Endothelial cell of umbilical vein (primary cell): ENCODE measurements at regions of chr15 and their contacts with region 1.

Region 1: GRCh38 chr15:78000091-78000926 is 77.2 kb downstream of the TBC1D2B start:
- DNase-seq: peak; percentile 79
- H3K4me3 ChIP-seq: no peak overlapping the region
- H3K27ac ChIP-seq: no peak overlapping the region
- H3K4me1 ChIP-seq: no peaks in the 10 kb centered on the region
- H3K27me3 ChIP-seq: no peaks in the 10 kb centered on the region
- CTCF ChIP-seq: peak; percentile 83 to 88
- POLR2A ChIP-seq: no peak

Region 2: GRCh38 chr15:77461486-77461885 is 538.8 kb before region 1 on chr15:
- CTCF ChIA-PET with region 1: no interaction called
- POLR2A ChIA-PET with region 1: no interaction called
- dilution Hi-C with region 1: no loop called
- intact Hi-C with region 1: no loop called
- DNase-seq: no peak
- H3K4me3 ChIP-seq: no peak overlapping the region
- H3K27ac ChIP-seq: no peak overlapping the region
- H3K4me1 ChIP-seq: peaks cover 34% of the 10 kb centered on the region
- H3K27me3 ChIP-seq: no peaks in the 10 kb centered on the region
- CTCF ChIP-seq: no peak
- POLR2A ChIP-seq: no peak

Region 3: DNA sequence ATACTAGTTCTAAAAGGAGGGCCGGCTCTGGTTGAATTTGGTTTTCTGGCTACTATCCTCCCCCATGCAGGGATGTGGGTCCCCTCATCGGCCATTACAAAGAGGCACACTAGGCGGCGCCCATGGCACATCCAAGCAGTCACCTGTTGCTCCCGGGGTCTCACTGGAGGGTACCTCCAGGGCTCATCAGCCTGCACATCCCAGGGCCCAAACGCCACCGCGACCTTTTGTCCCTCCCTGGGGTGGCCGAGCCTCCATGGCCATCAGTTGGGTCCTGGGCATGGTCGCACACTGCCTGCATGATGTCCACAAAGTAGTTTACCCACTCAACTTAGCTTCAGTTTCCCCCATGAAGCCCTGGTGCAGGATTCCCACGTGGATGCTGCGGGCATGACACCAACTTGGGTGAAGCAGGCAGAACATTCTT is 177.2 kb after region 1 on chr15:
- CTCF ChIA-PET with region 1: no interaction called
- POLR2A ChIA-PET with region 1: no interaction called
- dilution Hi-C with region 1: no loop called
- intact Hi-C with region 1: loop called (anchors 1 kb)
- DNase-seq: peak; percentile 26
- H3K4me3 ChIP-seq: no peak overlapping the region
- H3K27ac ChIP-seq: no peak overlapping the region
- H3K4me1 ChIP-seq: no peaks in the 10 kb centered on the region
- H3K27me3 ChIP-seq: no peaks in the 10 kb centered on the region
- CTCF ChIP-seq: peak; percentile 53 to 70
- POLR2A ChIP-seq: no peak